Transverse colon (tissue), 4 donors: ENCODE measurements at regions of chr1 and their contacts with region 1.

Region 1: DNA sequence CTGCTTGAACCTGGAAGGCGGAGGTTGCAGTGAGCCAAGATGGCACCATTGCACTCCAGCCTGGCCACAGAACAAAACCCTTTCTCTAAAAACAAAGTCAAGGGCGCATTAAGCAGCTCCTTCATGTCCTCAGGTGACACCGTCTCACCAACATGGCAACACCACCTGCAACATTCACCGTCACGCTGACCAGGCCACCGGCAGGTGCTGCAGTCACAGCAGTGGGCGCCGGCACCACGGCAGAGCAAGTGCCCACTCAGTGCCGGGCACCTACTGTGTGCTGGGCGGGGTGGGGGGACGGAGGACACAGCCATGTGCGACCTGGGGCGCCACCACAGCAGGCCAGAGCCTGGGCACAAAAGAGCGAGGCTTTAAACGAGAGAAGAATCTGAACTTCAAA is 12.1 kb downstream of the ATAD3B start:
- DNase-seq: no peak
- H3K4me3 ChIP-seq: no peak overlapping the region
- H3K27ac ChIP-seq: no peak overlapping the region
- H3K4me1 ChIP-seq: no peaks in the 10 kb centered on the region
- H3K27me3 ChIP-seq: no peaks in the 10 kb centered on the region
- CTCF ChIP-seq: no peak
- EP300 ChIP-seq: no peak
- POLR2A ChIP-seq: no peak

Region 2: DNA sequence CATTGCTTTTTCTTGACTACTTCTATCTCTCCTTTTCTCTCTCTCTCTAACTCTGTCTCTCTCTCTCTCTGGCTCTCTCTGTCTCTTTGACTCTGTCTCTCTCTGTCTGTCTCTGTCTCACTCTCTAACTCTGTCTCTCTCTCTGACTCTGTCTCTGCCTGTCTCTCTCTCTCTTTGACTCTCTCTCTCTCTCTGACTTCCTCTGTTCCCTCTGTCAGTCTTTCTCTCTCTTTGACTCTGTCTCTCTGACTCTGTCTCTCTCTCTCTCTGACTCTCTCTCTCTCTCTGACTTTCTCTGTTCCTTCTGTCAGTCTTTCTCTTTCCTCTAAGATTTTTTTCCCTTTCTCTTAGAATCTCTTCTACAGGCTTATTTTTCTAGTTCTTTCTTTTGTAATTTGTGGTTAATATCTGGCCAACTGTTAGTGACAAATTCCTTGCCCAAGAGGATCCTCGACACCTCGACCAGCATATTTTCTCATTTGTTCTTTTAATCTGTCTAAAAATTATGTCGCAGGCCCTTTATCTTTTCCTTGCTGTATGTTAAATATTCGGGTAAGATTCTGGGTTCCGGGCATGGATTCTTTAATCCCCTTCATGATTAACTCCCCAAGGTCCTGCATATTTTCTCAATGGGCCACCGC is 34.5 kb before region 1 on chr1 and contains the start of gene ATAD3C:
- in situ Hi-C with region 1: no loop called
- intact Hi-C with region 1: loop called (anchors 2 kb)
- DNase-seq: no peak
- H3K4me3 ChIP-seq: no peak within 1 kb of the TSS
- H3K27ac ChIP-seq: no peak within 1 kb of the TSS
- H3K4me1 ChIP-seq: peaks cover 0 to 5% (median 4%) of the 10 kb centered on the region in 4 donors
- H3K27me3 ChIP-seq: no peaks in the 10 kb centered on the region
- CTCF ChIP-seq: no peak
- EP300 ChIP-seq: no peak
- POLR2A ChIP-seq: no peak
- total RNA-seq, gene ATAD3C: 0.75 to 1.3 (median 1.00) TPM in 3 of 4 donors, not detected in the other